ENCODE measurements at regions of chr20 and their contacts with region 1.

Region 1: DNA sequence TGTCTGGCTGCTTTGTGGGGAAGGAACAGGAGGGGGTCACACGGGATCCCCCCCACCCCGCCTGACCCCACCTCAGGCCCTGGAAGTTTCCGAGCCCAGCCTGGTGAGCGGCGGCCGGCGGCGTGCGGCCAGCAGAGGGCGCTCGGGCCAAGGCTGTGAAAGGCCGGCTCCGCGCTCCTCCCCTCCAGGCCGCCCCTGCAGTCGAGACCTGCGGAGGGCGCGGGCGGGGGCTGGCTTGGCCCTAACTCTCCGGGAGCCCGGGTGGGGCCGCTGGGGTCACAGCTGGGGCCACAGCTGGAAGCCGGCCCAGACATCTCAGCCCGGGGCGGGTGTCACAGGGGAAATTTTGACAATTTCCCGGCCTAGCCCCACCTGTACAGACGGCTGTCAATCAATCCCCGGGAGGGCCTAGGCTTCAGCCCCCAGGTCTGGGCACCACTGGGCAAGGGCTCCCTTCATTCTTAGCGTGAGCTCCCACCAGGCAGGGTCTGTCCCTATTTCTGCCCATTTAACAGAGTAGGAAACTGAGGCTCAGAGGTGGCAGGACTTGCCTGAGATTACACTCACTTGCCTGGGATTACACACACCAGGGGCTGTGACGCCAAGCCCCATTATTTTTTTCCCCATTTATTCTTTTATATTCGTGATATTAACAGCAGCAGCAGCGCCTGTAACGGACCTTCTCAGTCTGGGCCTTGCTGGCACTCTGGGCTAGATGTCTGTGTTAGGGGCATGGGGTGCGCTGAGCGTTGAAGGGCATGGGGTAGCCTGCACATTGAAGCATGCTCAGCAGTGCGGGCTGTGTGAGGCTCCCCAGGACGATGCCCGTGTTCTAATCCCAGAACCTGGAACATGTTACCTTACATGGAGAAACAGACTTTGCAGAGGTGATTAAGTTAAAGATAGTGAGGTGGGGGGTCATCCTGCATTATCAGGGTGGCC is 23.0 kb downstream of the ZBP1 start:
- DNase-seq: peak; percentile 77 to 89
- H3K4me3 ChIP-seq: peak overlapping the region in 3 of 4 donors; percentile 6 to 31 (median 9)
- H3K27ac ChIP-seq: no peak overlapping the region
- H3K4me1 ChIP-seq: peaks cover 0 to 18% (median 11%) of the 10 kb centered on the region in 4 donors
- H3K27me3 ChIP-seq: peaks cover 0 to 38% (median 4%) of the 10 kb centered on the region in 3 donors
- CTCF ChIP-seq: peak in 5 of 7 experiments; percentile 77 to 98 (median 85)
- EP300 ChIP-seq: no peak
- POLR2A ChIP-seq: no peak

Region 2: GRCh38 chr20:57388953-57389694 is 208.1 kb before region 1 on chr20:
- intact Hi-C with region 1: loop called (anchors 10 kb)
- DNase-seq: peak; percentile 90 to 95
- H3K4me3 ChIP-seq: peak overlapping the region; percentile 37 to 94 (median 44)
- H3K27ac ChIP-seq: peak overlapping the region; percentile 65 to 92 (median 79)
- H3K4me1 ChIP-seq: peaks cover 32 to 47% (median 44%) of the 10 kb centered on the region in 4 donors
- H3K27me3 ChIP-seq: no peaks in the 10 kb centered on the region
- CTCF ChIP-seq: peak in 2 of 7 experiments; percentile 18 to 36
- EP300 ChIP-seq: no peak
- POLR2A ChIP-seq: no peak

Region 3: DNA sequence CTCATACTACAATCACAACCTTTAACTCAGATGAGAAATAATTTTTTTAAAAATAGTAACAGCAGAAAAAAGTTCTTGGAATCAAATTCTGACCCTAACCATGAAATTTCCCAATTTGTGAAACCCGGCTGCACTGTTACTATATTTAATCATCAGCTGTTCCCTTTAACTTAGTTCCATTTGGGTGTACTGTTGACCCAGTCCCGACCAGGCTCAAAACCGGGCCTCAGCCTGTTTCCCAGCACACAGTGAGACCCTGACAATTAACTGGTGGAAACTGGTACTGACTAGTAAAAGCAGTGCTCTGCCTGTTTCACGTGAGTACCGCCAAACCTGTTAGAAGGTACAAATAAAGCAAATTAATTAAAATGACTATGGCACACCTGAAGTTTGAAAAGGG is 79.4 kb before region 1 on chr20:
- intact Hi-C with region 1: loop called (anchors 2 kb)
- DNase-seq: no peak
- H3K4me3 ChIP-seq: no peak overlapping the region
- H3K27ac ChIP-seq: no peak overlapping the region
- H3K4me1 ChIP-seq: peaks cover 0 to 3% (median 0%) of the 10 kb centered on the region in 4 donors
- H3K27me3 ChIP-seq: no peaks in the 10 kb centered on the region
- CTCF ChIP-seq: no peak
- EP300 ChIP-seq: no peak
- POLR2A ChIP-seq: no peak

Region 4: GRCh38 chr20:58209652-58210397 is 612.6 kb after region 1 on chr20:
- intact Hi-C with region 1: loop called (anchors 2 kb)
- DNase-seq: peak; percentile 88 to 92
- H3K4me3 ChIP-seq: no peak overlapping the region
- H3K27ac ChIP-seq: no peak overlapping the region
- H3K4me1 ChIP-seq: peaks cover 0 to 7% (median 3%) of the 10 kb centered on the region in 4 donors
- H3K27me3 ChIP-seq: peaks cover 0 to 53% (median 13%) of the 10 kb centered on the region in 3 donors
- CTCF ChIP-seq: peak in 6 of 7 experiments; percentile 79 to 100 (median 100)
- EP300 ChIP-seq: no peak
- POLR2A ChIP-seq: no peak

Measured in stomach (tissue), 19 donors.